Activated CD8-positive, alpha-beta memory T cell treated with anti-CD3 and anti-CD28 coated beads, Interleukin-2, amount 10 ng/mL, durations not matched to agents 7 days and 5 days (primary cell): ENCODE measurements at regions of chr6 and their contacts with region 1.

Region 1: DNA sequence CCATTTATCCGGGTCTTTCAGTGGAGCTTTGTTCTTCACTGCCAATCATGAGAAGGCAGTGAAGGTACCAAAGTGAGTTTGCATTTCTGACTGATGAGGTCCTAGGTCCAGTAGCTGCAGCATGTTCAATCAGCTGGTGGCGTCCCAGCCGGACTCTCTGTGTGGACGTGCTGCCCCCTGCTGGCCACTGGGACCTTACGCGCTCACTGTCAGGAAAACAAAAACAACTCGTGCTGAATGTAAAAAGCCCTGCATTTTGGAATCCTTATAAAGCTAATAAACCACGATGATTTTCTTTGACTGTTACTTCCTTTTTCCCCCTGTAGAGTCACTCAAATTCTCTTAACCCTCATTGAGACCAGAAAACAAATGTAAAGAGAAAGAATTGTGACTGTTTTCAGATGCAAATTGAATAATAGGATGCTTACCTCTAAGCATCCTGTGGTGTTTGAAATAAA is 4.9 kb upstream of the CD24 start:
- DNase-seq: peak; percentile 83
- ATAC-seq: peak; percentile 75
- H3K4me3 Mint-ChIP-seq: no peak overlapping the region
- H3K27ac Mint-ChIP-seq: no peak overlapping the region
- H3K4me1 Mint-ChIP-seq: peaks cover 3% of the 10 kb centered on the region
- H3K27me3 Mint-ChIP-seq: peaks cover 44% of the 10 kb centered on the region

Region 2: GRCh38 chr6:106339334-106340029 is 640.0 kb before region 1 on chr6:
- CTCF ChIA-PET with region 1: interaction called, 19 read pairs
- DNase-seq: peak; percentile 66
- ATAC-seq: peak; percentile 89
- H3K4me3 Mint-ChIP-seq: no peak overlapping the region
- H3K27ac Mint-ChIP-seq: no peak overlapping the region
- H3K4me1 Mint-ChIP-seq: peaks cover 5% of the 10 kb centered on the region
- H3K27me3 Mint-ChIP-seq: peaks cover 28% of the 10 kb centered on the region

Region 3: DNA sequence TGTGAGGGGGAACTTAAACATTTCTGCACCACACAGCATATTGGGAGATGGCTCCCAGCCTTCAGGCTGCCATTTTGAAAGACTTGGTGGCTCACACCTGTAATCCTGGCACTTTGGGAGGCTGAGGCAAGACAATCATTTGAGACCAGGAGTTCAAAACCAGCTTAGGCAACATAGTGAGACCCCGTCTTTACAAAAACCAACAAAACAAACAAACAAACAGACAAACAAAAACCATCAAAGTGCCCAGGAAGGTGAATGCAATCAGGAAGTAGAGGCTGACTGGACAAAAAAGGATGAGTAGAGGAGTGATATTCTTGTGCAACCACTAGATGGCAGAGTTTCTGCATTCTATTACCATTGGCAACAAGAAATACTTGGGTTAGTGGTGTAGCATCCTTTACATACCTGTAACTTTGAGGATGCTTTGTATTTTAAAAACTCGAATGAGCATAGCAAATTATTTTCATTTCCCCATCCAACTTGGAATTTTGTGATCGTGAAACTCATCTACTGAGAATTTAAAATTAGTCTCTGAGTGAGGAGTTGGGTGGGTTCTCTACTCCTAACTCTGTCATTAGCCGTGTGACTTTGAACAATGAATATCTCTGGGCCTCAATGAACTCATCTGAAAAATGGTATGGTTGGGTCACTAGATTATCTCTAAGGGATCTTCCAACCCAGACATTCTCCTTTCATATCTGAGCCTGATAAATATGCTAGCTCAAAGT is 534.5 kb before region 1 on chr6:
- CTCF ChIA-PET with region 1: interaction called, 42 read pairs
- DNase-seq: no peak
- ATAC-seq: peak; percentile 73
- H3K4me3 Mint-ChIP-seq: no peak overlapping the region
- H3K27ac Mint-ChIP-seq: no peak overlapping the region
- H3K4me1 Mint-ChIP-seq: peaks cover 19% of the 10 kb centered on the region
- H3K27me3 Mint-ChIP-seq: peaks cover 37% of the 10 kb centered on the region

Region 4: GRCh38 chr6:106451439-106451838 is 528.0 kb before region 1 on chr6:
- CTCF ChIA-PET with region 1: interaction called, 16 read pairs
- DNase-seq: no peak
- ATAC-seq: no peak
- H3K4me3 Mint-ChIP-seq: no peak overlapping the region
- H3K27ac Mint-ChIP-seq: no peak overlapping the region
- H3K4me1 Mint-ChIP-seq: peaks cover 13% of the 10 kb centered on the region
- H3K27me3 Mint-ChIP-seq: no peaks in the 10 kb centered on the region

Region 5: DNA sequence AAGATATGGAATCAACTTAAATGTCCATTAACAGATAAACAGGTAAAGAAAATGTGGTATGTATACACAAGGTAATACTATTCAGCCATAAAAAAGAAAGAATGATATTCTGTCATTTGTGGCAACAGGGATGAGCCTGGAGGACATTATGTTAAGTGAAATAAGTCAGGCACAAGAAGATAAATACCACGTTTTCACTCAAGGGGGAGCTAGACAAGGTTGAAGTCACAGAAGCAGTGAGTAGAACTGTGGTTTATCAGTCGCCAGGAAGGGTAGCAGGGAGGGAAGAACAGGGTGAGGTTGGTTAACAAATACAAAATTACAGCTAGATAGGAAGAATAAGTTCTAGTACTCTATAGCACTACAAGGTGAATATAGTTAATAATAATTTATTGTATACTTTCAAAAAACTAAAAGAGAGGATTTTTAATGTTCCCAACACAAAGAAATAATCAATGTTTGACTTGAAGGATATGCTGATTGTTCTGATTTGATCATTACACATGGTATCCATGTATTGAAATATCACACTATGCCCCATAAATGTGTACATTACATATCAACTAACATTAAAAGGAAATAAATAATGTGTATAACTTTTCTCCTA is 371.3 kb before region 1 on chr6:
- CTCF ChIA-PET with region 1: interaction called, 24 read pairs
- DNase-seq: peak; percentile 51
- ATAC-seq: peak; percentile 87
- H3K4me3 Mint-ChIP-seq: no peak overlapping the region
- H3K27ac Mint-ChIP-seq: no peak overlapping the region
- H3K4me1 Mint-ChIP-seq: peaks cover 15% of the 10 kb centered on the region
- H3K27me3 Mint-ChIP-seq: no peaks in the 10 kb centered on the region

Region 6: DNA sequence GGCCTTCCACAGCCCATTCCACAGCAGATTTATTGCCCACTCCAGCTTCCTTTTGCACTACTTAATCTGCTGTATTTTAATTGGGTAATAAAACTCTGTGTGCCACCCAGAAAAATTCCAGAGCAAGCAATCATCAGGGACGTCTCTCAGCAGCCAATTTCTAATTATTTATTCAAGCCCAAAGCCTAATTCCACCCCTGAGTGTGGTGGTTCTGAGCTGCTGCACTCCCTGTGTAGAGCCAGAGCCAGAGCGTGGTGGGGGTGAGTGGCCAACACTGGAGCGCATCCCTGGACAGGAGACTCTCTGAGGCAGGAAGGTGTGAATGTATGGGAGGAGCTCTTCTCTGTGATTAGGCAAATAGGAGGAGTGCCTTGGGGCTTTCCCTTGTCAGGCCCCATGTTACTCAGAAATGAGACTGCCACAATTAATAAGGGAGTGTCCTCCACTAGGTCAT is 71.0 kb before region 1 on chr6:
- CTCF ChIA-PET with region 1: no interaction called
- DNase-seq: no peak
- ATAC-seq: no peak
- H3K4me3 Mint-ChIP-seq: no peak overlapping the region
- H3K27ac Mint-ChIP-seq: no peak overlapping the region
- H3K4me1 Mint-ChIP-seq: no peaks in the 10 kb centered on the region
- H3K27me3 Mint-ChIP-seq: peaks cover 8% of the 10 kb centered on the region

Region 7: DNA sequence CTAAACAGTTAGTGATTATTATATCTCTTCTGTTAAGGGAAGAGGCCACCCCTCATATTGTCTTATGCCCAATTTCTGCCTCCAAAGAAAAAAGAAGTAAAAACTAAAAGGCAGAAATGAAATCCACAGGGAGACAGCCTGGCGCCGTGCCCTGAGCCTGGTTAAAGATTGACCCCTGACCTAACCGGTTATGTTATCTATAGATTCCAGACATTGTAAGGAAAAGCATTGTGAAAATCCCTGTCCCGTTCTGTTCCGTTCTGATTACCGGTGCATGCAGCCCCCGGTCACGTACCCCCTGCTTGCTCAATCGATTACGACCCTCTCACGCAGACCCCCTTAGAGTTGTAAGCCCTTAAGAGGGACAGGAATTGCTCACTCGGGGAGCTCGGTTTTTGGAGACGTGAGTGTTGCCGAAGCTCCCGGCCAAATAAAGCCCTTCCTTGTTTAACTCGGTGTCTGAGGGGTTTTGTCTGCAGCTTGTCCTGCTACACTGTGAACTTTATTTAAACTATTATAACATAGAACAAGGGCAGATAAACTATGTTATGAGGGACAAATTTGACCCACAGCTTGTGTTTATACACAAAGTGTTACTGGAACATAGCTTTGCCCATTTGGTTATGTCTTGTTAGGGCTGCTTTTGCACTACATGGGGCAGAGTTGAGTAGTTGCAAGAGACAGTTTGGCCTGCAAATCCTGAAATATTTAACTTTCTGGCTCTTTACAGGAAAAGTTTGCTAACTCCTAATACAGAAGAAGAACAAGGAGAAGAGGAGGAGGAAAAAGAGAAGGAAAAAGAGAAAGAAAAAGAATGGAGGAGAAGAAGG is 54.5 kb before region 1 on chr6:
- CTCF ChIA-PET with region 1: no interaction called
- DNase-seq: no peak
- ATAC-seq: no peak
- H3K4me3 Mint-ChIP-seq: no peak overlapping the region
- H3K27ac Mint-ChIP-seq: no peak overlapping the region
- H3K4me1 Mint-ChIP-seq: no peaks in the 10 kb centered on the region
- H3K27me3 Mint-ChIP-seq: peaks cover 30% of the 10 kb centered on the region

Region 8: GRCh38 chr6:107021446-107022185 is 42.2 kb after region 1 on chr6:
- CTCF ChIA-PET with region 1: no interaction called
- DNase-seq: no peak
- ATAC-seq: no peak
- H3K4me3 Mint-ChIP-seq: no peak overlapping the region
- H3K27ac Mint-ChIP-seq: no peak overlapping the region
- H3K4me1 Mint-ChIP-seq: peaks cover 9% of the 10 kb centered on the region
- H3K27me3 Mint-ChIP-seq: no peaks in the 10 kb centered on the region